HCT116 (cell line): ENCODE measurements at regions of chr14 and their contacts with region 1.

Region 1: DNA sequence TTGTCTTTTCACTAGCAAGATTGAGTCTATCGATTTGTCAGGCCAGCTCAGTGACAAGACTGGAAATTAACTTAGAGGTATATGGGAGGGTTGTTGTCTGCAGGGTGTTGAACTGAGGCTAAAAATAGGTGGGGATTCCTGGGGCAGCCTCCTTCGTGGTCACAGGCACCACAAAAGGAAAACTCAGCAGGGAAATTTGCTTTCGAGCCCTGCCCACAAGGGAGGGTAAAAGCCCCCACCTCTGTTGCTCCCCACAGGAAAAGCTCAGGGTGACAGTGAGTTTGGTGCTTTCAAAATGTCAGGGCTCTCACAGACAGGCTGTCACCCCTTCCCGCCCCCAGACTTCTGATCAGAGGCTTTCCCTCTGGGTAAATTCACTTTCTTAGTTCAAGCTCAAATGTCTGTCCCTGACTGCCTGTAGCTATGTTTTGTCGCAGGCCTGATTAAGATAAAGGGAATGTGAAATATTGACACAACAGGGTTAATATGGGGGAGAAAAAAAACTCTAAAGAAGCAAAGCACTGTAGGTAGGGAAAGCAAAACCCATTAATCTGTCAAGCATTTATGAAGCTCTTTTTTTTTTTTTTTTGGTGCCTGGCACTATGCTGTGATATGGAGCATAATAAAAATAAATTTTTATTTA is 11.7 kb upstream of the NFKBIA start:
- DNase-seq: no peak
- ATAC-seq: no peak
- H3K4me3 ChIP-seq: no peak overlapping the region
- H3K27ac ChIP-seq: no peak overlapping the region
- H3K4me1 ChIP-seq: peaks cover 2 to 6% of the 10 kb centered on the region in 2 experiments; a peak in 1 of 4 replicates
- H3K27me3 ChIP-seq: no peaks in the 10 kb centered on the region
- CTCF ChIP-seq: no peak
- POLR2A ChIP-seq: no peak
- RAD21 ChIP-seq: no peak

Region 2: DNA sequence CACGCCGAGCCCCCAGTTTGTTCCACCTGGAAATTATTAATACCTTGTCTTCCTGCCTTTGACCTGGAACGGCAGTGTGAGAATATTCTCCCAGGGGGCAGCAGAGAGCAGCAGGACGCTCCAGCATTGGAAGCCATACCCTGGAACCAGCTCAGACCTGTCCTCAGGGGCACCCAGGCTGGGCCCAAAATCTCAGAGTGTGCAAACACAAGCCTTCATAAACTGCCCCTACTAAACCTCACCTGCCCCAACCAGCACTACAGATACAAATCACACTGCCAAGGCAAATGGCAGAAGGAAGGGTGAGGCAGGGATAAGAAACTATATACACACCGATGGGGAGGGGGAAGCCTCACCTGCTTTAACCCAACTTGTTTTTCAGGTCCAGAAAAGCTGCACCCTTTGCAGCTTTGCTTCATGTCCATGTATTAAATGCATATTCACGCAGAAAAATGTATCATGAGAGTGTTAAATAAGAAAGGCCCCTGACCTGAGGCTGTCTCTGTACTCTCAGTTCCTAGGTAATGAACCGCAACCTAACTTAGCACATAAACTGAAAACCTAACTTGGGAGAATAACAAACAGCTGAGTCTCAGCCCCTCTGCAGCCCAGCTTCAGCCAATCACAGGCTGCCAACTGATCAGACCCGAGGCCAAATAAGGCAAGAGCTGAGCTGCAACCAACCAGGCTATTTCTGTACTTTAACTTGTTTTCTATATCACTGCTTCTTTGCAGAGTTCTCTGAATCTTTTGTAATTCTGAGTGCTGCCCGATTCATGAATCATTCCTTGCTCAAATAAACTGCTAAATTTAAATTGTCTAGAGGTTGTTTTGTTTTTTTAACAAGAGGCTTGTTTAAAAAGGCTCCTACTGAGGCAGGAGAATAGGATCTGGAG is 1084.3 kb before region 1 on chr14:
- CTCF ChIA-PET with region 1: no interaction called
- POLR2A ChIA-PET with region 1: no interaction called
- RAD21 ChIA-PET with region 1: no interaction called
- intact Hi-C with region 1: loop called (anchors 5 kb)
- DNase-seq: peak; percentile 57
- ATAC-seq: peak; percentile 96
- H3K4me3 ChIP-seq: no peak overlapping the region
- H3K27ac ChIP-seq: peak overlapping the region; percentile 38
- H3K4me1 ChIP-seq: peaks cover 6 to 17% of the 10 kb centered on the region in 2 experiments; a peak in 3 of 4 replicates
- H3K27me3 ChIP-seq: no peaks in the 10 kb centered on the region
- CTCF ChIP-seq: peak; percentile 69 to 93 (median 86); a peak in 5 of 6 replicates
- POLR2A ChIP-seq: peak; percentile 31
- RAD21 ChIP-seq: peak; percentile 82

Region 3: DNA sequence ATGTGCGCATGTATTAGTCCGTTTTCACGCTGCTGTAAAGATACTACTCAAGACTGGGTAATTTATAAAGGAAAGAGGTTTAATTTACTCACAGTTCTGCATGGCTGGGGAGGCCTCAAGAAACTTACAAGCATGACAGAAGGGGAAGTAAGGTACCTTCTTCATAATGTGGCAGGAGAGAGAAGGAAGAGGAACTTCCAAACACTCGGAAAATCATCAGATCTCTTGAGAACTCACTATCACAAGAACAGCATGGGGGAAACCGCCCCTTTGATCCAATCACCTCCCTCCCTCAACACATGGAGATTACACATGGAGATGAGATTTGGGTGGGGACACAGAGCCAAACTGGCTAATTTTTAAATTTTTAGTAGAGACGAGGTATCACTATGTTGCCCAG is 744.5 kb before region 1 on chr14:
- CTCF ChIA-PET with region 1: no interaction called
- POLR2A ChIA-PET with region 1: no interaction called
- RAD21 ChIA-PET with region 1: no interaction called
- intact Hi-C with region 1: loop called (anchors 2 kb)
- DNase-seq: no peak
- ATAC-seq: no peak
- H3K4me3 ChIP-seq: no peak overlapping the region
- H3K27ac ChIP-seq: no peak overlapping the region
- H3K4me1 ChIP-seq: no peaks in the 10 kb centered on the region
- H3K27me3 ChIP-seq: no peaks in the 10 kb centered on the region
- CTCF ChIP-seq: no peak
- POLR2A ChIP-seq: no peak
- RAD21 ChIP-seq: no peak

Region 4: GRCh38 chr14:35229495-35230089 is 186.6 kb before region 1 on chr14:
- CTCF ChIA-PET with region 1: interaction called, 4 read pairs
- POLR2A ChIA-PET with region 1: no interaction called
- RAD21 ChIA-PET with region 1: no interaction called
- intact Hi-C with region 1: loop called (anchors 1 kb)
- DNase-seq: no peak
- ATAC-seq: peak; percentile 62; the same call in 1 of the 2 replicates
- H3K4me3 ChIP-seq: no peak overlapping the region
- H3K27ac ChIP-seq: no peak overlapping the region
- H3K4me1 ChIP-seq: no peaks in the 10 kb centered on the region
- H3K27me3 ChIP-seq: no peaks in the 10 kb centered on the region
- CTCF ChIP-seq: peak; percentile 25 to 52 (median 44); a peak in 4 of 6 replicates
- POLR2A ChIP-seq: no peak
- RAD21 ChIP-seq: peak; percentile 62

Region 5: DNA sequence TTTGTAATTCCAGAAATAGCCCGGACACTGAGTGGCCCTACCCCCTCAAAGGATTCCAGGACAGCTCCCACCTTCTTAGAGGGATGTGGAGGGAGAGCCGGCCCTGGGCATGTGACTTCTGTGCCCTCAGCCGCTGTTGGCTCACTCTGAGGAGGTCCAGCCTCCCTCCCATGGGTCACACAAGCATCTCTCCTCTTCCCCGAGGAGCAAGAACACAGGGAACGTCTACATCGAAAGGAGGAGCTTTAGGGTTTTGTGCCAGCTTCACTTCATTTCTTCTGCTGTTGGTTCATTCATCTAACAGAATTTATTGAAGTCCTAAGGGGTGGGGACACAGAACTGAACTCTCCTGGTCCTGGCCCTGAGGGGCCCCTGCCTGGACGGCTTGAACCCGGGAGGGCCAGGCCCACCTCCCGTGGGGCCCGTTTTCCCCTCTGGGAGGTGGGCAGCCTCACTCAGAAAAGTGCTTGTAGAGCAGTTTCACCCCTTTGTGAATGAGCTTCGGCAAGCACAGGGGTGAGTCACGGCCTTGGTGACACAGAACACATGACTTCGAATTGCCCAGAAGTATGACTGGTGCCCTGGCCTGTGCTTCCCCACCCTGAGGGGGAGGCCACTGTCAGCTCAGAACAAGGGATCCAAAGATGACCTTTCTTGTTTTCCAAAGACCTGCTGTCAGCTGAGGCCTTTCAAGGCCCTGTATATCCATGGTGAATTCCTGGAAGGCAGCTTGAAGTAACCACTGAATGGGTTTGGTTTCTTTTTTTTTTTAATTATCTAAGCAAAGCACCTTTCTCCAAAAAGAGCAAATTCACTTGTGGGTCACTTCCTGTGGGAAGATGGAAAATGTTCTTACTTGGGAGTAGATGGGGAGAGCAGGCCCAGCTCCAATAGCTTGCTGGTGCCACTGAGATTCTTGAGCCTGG is 50.8 kb before region 1 on chr14:
- CTCF ChIA-PET with region 1: no interaction called
- POLR2A ChIA-PET with region 1: no interaction called
- RAD21 ChIA-PET with region 1: no interaction called
- intact Hi-C with region 1: no loop called
- DNase-seq: peak; percentile 54
- ATAC-seq: peak; percentile 90
- H3K4me3 ChIP-seq: no peak overlapping the region
- H3K27ac ChIP-seq: peak overlapping the region; percentile 31
- H3K4me1 ChIP-seq: peaks cover 12 to 31% of the 10 kb centered on the region in 2 experiments
- H3K27me3 ChIP-seq: no peaks in the 10 kb centered on the region
- CTCF ChIP-seq: no peak
- POLR2A ChIP-seq: no peak
- RAD21 ChIP-seq: no peak

Region 6: DNA sequence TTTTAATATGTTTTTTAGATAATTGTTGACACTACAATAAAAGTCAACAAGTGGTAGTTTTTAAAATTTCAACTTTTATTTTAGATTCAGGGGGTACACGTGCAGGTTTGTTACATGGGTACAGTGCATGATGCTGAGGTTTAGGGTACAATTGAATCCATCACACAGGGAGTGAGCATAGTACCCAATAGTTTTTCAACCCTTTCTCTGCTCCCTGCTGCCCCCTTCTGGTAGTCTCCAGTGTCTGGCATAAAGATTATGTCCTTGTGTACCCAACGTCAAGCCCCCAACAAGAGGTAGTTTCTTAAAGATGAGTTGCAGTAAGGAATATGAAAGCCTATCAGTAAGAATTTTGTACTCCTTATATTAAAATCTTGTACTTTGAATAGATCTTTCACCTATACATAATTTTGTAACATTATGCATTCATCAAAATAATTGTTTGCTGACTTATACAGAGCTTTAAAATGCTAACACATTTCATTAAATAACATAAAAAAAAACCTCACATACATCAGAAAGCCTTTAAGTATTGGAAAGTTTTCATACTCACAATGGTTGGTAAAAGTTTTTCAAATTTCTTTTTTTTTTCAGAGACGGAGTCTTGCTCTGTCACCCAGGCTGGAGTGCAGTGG is 398.3 kb after region 1 on chr14:
- CTCF ChIA-PET with region 1: interaction called, 3 read pairs
- POLR2A ChIA-PET with region 1: no interaction called
- RAD21 ChIA-PET with region 1: no interaction called
- intact Hi-C with region 1: loop called (anchors 5 kb)
- DNase-seq: peak; percentile 47
- ATAC-seq: peak; percentile 89
- H3K4me3 ChIP-seq: no peak overlapping the region
- H3K27ac ChIP-seq: no peak overlapping the region
- H3K4me1 ChIP-seq: peaks cover 0 to 2% of the 10 kb centered on the region in 2 experiments; a peak in 3 of 4 replicates
- H3K27me3 ChIP-seq: no peaks in the 10 kb centered on the region
- CTCF ChIP-seq: peak; percentile 24 to 86 (median 79); a peak in 5 of 6 replicates
- POLR2A ChIP-seq: no peak
- RAD21 ChIP-seq: peak; percentile 42